ENCODE measurements at regions of chr10 and their contacts with region 1.

Region 1: DNA sequence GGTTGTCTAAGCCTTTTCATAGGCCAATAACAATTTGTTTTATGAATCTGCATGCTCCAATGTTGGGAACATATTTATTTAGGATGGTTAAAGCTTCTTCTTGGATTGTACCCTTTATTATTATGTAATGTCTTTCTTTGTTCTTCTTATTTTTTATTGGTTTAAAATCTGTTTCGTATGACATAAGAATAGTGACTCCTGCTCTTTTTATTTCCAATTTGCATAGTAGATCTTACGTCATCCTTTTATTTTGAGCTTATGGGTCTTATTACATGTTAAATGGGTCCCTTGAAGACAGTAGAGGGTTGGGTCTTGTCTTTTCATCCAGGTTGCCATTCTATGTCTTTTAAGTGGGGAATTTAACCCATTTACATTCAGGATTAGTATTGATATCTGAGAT is 561.9 kb upstream of the GHITM start:
- DNase-seq: no peak
- H3K4me3 Mint-ChIP-seq: no peak overlapping the region
- H3K27ac Mint-ChIP-seq: no peak overlapping the region
- H3K4me1 Mint-ChIP-seq: no peaks in the 10 kb centered on the region
- H3K27me3 Mint-ChIP-seq: no peaks in the 10 kb centered on the region

Region 2: GRCh38 chr10:83533290-83533689 is 44.1 kb before region 1 on chr10:
- intact Hi-C with region 1: loop called (anchors 2 kb)
- DNase-seq: no peak
- H3K4me3 Mint-ChIP-seq: no peak overlapping the region
- H3K27ac Mint-ChIP-seq: no peak overlapping the region
- H3K4me1 Mint-ChIP-seq: no peaks in the 10 kb centered on the region
- H3K27me3 Mint-ChIP-seq: no peaks in the 10 kb centered on the region

Measured in activated T-helper 1 cell treated with anti-CD3 and anti-CD28 coated beads, Interleukin-12 subunit alpha, Interleukin-12 subunit beta, Interleukin-2, Interleukin-4 antibody, amounts not matched to agents 30 ng/mL and 10 ng/mL and 1 ng/mL, durations not matched to agents 14 hours and 24 hours and 36 hours (primary cell).